ENCODE measurements at regions of chr10 and their contacts with region 1.

Region 1: GRCh38 chr10:9091530-9092093 is 1037.1 kb downstream of the GATA3 start:
- DNase-seq: no peak
- H3K4me3 Mint-ChIP-seq: no peak overlapping the region
- H3K27ac Mint-ChIP-seq: peak overlapping the region; percentile 24
- H3K4me1 Mint-ChIP-seq: peaks cover 49% of the 10 kb centered on the region
- H3K27me3 Mint-ChIP-seq: no peaks in the 10 kb centered on the region

Region 2: DNA sequence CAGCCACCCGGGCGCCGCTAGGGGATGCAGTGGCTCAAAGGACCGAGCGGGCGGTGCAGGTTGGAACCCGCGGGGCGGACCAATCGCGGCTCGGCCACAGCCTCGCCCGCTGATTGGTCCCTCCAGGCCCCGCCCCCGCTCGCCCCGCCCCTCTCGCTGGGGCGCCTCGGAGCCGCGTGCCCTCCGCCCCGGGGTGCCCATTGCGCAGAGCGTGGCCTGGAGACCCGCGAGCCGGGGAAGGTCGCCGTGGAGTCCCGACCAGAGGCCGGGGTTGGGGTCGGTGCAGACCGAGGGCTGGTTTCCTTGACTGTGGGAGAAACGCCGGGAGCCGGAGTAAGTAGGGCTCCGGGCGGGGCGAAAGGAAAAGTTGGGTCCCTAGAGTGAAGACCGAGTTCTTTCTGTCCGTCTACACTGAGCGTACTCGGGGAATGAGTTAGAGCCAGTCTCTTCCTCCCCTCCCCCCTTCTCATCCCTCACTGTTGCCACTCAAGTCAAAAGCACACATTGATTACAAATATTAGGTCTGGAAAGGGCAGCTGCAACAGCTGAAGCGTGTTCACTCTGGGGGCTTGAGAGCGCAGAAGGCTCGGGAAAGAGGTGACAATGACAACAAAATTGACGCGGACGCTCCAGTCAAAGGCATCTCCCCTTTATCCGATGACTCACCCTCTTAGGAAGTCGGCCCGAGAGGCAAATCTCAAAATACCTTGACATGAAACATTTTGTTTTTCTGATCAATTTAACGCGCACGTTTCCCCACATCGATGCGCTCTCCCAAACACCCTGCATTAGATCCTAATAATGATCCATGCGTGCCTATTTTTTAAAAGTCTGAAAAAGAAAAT is 1037.9 kb before region 1 on chr10:
- intact Hi-C with region 1: no loop called
- DNase-seq: peak; percentile 89
- H3K4me3 Mint-ChIP-seq: peak overlapping the region; percentile 89
- H3K27ac Mint-ChIP-seq: peak overlapping the region; percentile 95
- H3K4me1 Mint-ChIP-seq: peaks cover 13% of the 10 kb centered on the region
- H3K27me3 Mint-ChIP-seq: no peaks in the 10 kb centered on the region

Region 3: GRCh38 chr10:8130973-8131911 is 960.4 kb before region 1 on chr10:
- intact Hi-C with region 1: loop called (anchors 5 kb)
- DNase-seq: peak; percentile 55
- H3K4me3 Mint-ChIP-seq: peak overlapping the region; percentile 47
- H3K27ac Mint-ChIP-seq: peak overlapping the region; percentile 80
- H3K4me1 Mint-ChIP-seq: peaks cover 62% of the 10 kb centered on the region
- H3K27me3 Mint-ChIP-seq: no peaks in the 10 kb centered on the region

Region 4: GRCh38 chr10:8360365-8360764 is 731.2 kb before region 1 on chr10:
- intact Hi-C with region 1: loop called (anchors 2 kb)
- DNase-seq: peak; percentile 37
- H3K4me3 Mint-ChIP-seq: peak overlapping the region; percentile 70
- H3K27ac Mint-ChIP-seq: peak overlapping the region; percentile 88
- H3K4me1 Mint-ChIP-seq: peaks cover 79% of the 10 kb centered on the region
- H3K27me3 Mint-ChIP-seq: no peaks in the 10 kb centered on the region

Region 5: DNA sequence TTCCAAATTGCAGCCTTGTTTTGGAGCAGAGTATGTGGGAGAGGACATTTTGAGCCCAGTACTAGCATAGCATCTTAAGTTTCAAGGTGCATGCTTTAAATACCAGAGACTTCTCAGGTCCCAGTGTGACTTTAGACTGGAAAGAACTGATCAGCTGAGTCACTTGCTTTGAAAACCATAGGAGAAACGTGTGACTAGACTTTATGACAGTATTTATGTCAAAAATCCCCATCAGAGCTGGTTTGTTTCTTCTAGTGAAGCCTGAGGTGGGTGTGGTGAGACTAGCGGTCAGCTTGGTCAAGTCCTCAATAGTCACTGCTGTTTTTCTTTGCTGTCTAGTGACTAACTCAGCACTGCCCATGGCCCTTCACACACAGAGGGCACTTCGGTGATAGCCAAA is 312.9 kb before region 1 on chr10:
- intact Hi-C with region 1: loop called (anchors 5 kb)
- DNase-seq: no peak
- H3K4me3 Mint-ChIP-seq: no peak overlapping the region
- H3K27ac Mint-ChIP-seq: peak overlapping the region; percentile 84
- H3K4me1 Mint-ChIP-seq: peaks cover 33% of the 10 kb centered on the region
- H3K27me3 Mint-ChIP-seq: no peaks in the 10 kb centered on the region

Region 6: DNA sequence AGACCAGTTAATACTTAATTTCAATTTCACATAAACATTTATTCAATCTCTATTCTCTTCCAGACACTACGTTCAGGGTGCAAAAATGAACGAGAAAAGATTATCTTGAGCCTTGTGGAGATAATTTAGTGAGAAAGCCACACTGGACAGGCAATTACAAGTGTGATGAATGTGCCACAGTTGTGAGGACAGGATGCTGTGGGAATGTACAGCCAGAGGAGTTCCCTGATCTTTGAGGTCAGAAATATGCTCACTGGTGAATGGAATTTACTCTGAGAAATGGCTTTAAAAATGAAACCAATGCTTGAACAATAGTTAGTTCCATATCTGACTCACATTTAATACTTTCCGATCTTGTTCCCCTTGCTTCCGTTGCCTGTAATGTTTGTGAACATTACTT is 172.3 kb before region 1 on chr10:
- intact Hi-C with region 1: no loop called
- DNase-seq: no peak
- H3K4me3 Mint-ChIP-seq: no peak overlapping the region
- H3K27ac Mint-ChIP-seq: peak overlapping the region; percentile 18
- H3K4me1 Mint-ChIP-seq: peaks cover 9% of the 10 kb centered on the region
- H3K27me3 Mint-ChIP-seq: no peaks in the 10 kb centered on the region

Region 7: DNA sequence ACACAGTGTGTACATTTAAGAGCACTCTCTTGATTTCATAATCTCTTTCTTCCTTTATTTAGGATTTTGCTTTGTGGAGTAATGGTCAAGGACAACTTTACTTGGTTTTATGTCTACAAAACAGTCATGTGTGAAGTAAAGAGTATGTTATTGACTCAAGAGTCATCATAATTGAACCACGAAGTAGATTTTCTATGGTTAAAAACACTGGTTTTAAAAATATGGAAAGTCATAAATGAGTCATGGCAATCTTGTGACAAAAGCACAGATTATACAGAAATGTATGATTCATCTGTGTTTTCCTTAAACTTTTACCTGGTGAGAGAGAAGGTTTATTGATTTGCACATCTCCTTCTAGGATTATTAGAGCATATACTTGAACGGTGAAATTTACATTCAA is 67.4 kb before region 1 on chr10:
- intact Hi-C with region 1: loop called (anchors 1 kb)
- DNase-seq: no peak
- H3K4me3 Mint-ChIP-seq: no peak overlapping the region
- H3K27ac Mint-ChIP-seq: peak overlapping the region; percentile 88
- H3K4me1 Mint-ChIP-seq: peaks cover 74% of the 10 kb centered on the region
- H3K27me3 Mint-ChIP-seq: no peaks in the 10 kb centered on the region

Region 8: GRCh38 chr10:9175200-9175599 is 83.6 kb after region 1 on chr10:
- intact Hi-C with region 1: loop called (anchors 1 kb)
- DNase-seq: no peak
- H3K4me3 Mint-ChIP-seq: no peak overlapping the region
- H3K27ac Mint-ChIP-seq: peak overlapping the region; percentile 79
- H3K4me1 Mint-ChIP-seq: peaks cover 18% of the 10 kb centered on the region
- H3K27me3 Mint-ChIP-seq: no peaks in the 10 kb centered on the region

Measured in activated T-helper 2 cell treated with anti-CD3 and anti-CD28 coated beads, Interferon-gamma antibody, Interleukin-2, Interleukin-4, amounts not matched to agents 10 μg/mL and 5 μg/mL and 100 μg/mL, durations not matched to agents 14 hours and 24 hours and 36 hours (primary cell).